ENCODE measurements at regions of chr19 and their contacts with region 1.

Region 1: GRCh38 chr19:17260842-17261325 is 3.7 kb downstream of the USHBP1 start:
- DNase-seq: peak; percentile 87
- H3K4me3 ChIP-seq: no peak overlapping the region
- H3K27ac ChIP-seq: no peak overlapping the region
- H3K4me1 ChIP-seq: no peaks in the 10 kb centered on the region
- H3K27me3 ChIP-seq: no peaks in the 10 kb centered on the region
- CTCF ChIP-seq: peak; percentile 71
- EP300 ChIP-seq: no peak
- RAD21 ChIP-seq: peak; percentile 41

Region 2: DNA sequence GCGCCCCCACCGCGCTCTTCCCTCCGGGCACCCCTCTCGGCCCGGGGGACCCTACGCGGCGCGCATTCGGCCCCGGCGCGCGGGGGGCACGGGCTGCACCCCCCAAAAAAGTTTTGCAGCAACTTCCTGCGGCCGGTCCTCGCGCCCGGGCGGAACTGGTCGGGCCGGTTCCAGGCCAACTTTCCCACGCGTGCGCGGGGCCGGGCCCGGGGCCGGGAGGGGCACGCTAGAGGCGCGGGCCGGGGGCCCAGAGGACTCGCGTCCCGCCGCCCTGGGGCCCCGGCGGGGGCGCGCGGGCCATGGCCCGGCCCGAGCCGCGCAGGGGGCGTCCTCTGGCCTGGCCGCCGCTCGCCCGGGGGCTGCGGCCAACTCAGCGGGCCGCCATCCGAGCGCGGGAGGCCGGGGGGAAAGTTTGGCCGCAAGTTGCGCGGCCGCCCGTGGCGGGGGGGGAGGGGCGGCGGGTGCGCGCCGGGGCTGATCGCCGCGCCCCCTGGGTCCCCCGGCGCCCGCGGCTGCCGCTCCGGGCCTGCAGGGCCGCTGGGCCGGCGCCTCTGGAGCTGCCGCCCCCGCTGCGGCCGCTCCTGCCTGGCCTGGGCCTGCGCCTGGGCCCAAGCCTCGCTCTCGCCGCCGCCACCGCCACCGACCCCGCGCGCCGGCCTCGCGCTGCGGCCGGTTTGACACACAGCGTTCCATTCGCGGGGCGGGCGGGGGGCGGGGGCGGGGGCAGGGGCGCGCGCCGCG is 15.5 kb before region 1 on chr19 and contains the start of gene NR2F6:
- CTCF ChIA-PET with region 1: interaction called, 14 read pairs
- POLR2A ChIA-PET with region 1: interaction called, 5 read pairs
- DNase-seq: no peak
- H3K4me3 ChIP-seq: peak within 1 kb of the TSS; percentile 92 to 97
- H3K27ac ChIP-seq: peak within 1 kb of the TSS; percentile 22 to 81; a peak in 3 of 4 replicates
- H3K4me1 ChIP-seq: peaks cover 6 to 26% of the 10 kb centered on the region in 2 experiments; a peak in 2 of 4 replicates
- H3K27me3 ChIP-seq: no peaks in the 10 kb centered on the region
- CTCF ChIP-seq: no peak
- EP300 ChIP-seq: no peak
- RAD21 ChIP-seq: no peak
- polyA plus RNA-seq, gene NR2F6: 31.7 and 37.3 TPM in 2 replicates